ENCODE measurements at regions of chr17 and their contacts with region 1.

Region 1: GRCh38 chr17:47615766-47616424 is 33.8 kb upstream of the KPNB1 start:
- DNase-seq: peak in 2 of 5 donors; percentile 36 to 46
- H3K4me3 ChIP-seq: no peak overlapping the region
- H3K4me3 Mint-ChIP-seq: no peak overlapping the region
- H3K27ac ChIP-seq: no peak overlapping the region
- H3K27ac Mint-ChIP-seq: peak overlapping the region in 4 of 8 donors; percentile 30 to 81 (median 51)
- H3K4me1 ChIP-seq: no peaks in the 10 kb centered on the region
- H3K4me1 Mint-ChIP-seq: peaks cover 3 to 7% (median 5%) of the 10 kb centered on the region in 3 donors
- H3K27me3 ChIP-seq: no peaks in the 10 kb centered on the region
- H3K27me3 Mint-ChIP-seq: no peaks in the 10 kb centered on the region

Region 2: DNA sequence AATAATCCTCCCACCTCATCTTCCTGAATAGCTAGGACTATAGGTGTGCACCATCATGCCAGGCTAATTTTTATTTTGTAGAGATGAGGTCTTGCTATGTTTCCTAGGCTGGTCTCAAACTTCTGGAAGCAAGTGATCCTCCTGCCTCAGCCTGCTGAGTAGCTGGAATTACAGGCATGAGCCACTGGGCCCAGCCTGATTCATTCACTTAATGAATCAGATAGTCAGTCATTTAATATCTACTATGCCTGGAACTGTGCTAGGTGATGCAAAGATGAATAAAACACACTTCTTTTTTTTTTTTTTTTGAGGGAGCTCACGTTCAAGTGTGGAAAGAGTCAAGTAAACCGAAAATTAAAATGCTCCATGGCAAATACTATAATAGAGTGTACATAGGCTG is 252.7 kb before region 1 on chr17:
- CTCF ChIA-PET with region 1: interaction called, 11 read pairs
- POLR2A ChIA-PET with region 1: no interaction called
- DNase-seq: no peak
- H3K4me3 ChIP-seq: no peak overlapping the region
- H3K4me3 Mint-ChIP-seq: no peak overlapping the region
- H3K27ac ChIP-seq: no peak overlapping the region
- H3K27ac Mint-ChIP-seq: no peak overlapping the region
- H3K4me1 ChIP-seq: no peaks in the 10 kb centered on the region
- H3K4me1 Mint-ChIP-seq: no peaks in the 10 kb centered on the region
- H3K27me3 ChIP-seq: no peaks in the 10 kb centered on the region
- H3K27me3 Mint-ChIP-seq: peaks cover 0 to 10% of the 10 kb centered on the region in 2 donors

Region 3: GRCh38 chr17:47628014-47628566 is 12.2 kb after region 1 on chr17:
- CTCF ChIA-PET with region 1: interaction called, 20 read pairs
- POLR2A ChIA-PET with region 1: interaction called, 10 read pairs
- DNase-seq: no peak
- H3K4me3 ChIP-seq: no peak overlapping the region
- H3K4me3 Mint-ChIP-seq: no peak overlapping the region
- H3K27ac ChIP-seq: no peak overlapping the region
- H3K27ac Mint-ChIP-seq: peak overlapping the region in 1 of 8 donors; percentile 26
- H3K4me1 ChIP-seq: no peaks in the 10 kb centered on the region
- H3K4me1 Mint-ChIP-seq: no peaks in the 10 kb centered on the region
- H3K27me3 ChIP-seq: no peaks in the 10 kb centered on the region
- H3K27me3 Mint-ChIP-seq: no peaks in the 10 kb centered on the region

Region 4: DNA sequence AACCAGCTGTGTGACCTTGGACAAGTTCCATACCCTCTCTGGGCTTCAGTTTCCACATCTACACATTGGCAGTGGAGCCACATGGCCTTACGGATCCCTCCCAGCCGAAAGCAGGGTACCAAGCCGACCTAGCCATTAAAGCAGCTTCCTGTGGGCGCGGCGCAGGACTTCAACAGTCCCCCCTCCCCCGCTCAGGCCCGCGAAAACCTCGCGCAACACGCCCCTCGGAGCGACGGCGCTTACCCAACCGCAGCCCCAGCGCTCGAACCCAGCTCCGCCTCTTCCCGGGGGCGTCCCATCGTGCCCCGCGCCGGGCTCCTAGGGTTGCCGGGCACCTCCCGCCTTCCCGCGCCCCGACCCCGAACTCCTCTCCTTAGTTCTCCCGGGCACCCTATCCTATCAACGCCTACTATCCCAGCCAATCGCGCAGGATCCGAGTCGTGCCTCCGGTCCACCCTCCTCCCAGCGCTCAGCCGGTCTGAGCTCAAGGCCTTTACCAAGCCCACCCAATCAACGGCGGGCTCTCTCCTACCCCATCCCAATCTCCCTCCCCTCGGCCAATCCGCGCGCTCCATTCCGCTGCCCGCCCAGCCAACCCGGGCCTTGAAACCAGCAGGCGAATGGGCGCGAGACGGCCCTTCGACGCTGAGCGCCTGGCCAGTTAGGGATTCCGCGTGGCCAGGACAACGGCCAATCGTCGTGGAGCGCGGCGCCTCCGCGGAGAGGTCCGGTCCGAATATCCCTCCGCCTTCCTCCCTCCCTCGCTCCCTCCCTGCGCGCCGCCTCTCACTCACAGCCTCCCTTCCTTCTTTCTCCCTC is 33.5 kb after region 1 on chr17 and contains the start of gene KPNB1:
- CTCF ChIA-PET with region 1: interaction called, 11 read pairs
- POLR2A ChIA-PET with region 1: interaction called, 4 read pairs
- DNase-seq: peak; percentile 98 to 99 (median 98)
- H3K4me3 ChIP-seq: peak within 1 kb of the TSS; percentile 84
- H3K4me3 Mint-ChIP-seq: peak within 1 kb of the TSS; percentile 91 to 100 (median 98)
- H3K27ac ChIP-seq: peak within 1 kb of the TSS; percentile 85
- H3K27ac Mint-ChIP-seq: peak within 1 kb of the TSS; percentile 92 to 100 (median 98)
- H3K4me1 ChIP-seq: peaks cover 49% of the 10 kb centered on the region
- H3K4me1 Mint-ChIP-seq: peaks cover 39 to 65% (median 53%) of the 10 kb centered on the region in 3 donors
- H3K27me3 ChIP-seq: no peaks in the 10 kb centered on the region
- H3K27me3 Mint-ChIP-seq: peaks cover 0 to 5% of the 10 kb centered on the region in 2 donors
- total RNA-seq, gene KPNB1: 907 to 915 TPM

Region 5: GRCh38 chr17:47687748-47688147 is 71.9 kb after region 1 on chr17:
- CTCF ChIA-PET with region 1: no interaction called
- POLR2A ChIA-PET with region 1: no interaction called
- DNase-seq: no peak
- H3K4me3 ChIP-seq: no peak overlapping the region
- H3K4me3 Mint-ChIP-seq: no peak overlapping the region
- H3K27ac ChIP-seq: no peak overlapping the region
- H3K27ac Mint-ChIP-seq: peak overlapping the region in 4 of 8 donors; percentile 44 to 79 (median 70)
- H3K4me1 ChIP-seq: peaks cover 4% of the 10 kb centered on the region
- H3K4me1 Mint-ChIP-seq: peaks cover 11 to 13% (median 11%) of the 10 kb centered on the region in 3 donors
- H3K27me3 ChIP-seq: no peaks in the 10 kb centered on the region
- H3K27me3 Mint-ChIP-seq: no peaks in the 10 kb centered on the region

Region 6: DNA sequence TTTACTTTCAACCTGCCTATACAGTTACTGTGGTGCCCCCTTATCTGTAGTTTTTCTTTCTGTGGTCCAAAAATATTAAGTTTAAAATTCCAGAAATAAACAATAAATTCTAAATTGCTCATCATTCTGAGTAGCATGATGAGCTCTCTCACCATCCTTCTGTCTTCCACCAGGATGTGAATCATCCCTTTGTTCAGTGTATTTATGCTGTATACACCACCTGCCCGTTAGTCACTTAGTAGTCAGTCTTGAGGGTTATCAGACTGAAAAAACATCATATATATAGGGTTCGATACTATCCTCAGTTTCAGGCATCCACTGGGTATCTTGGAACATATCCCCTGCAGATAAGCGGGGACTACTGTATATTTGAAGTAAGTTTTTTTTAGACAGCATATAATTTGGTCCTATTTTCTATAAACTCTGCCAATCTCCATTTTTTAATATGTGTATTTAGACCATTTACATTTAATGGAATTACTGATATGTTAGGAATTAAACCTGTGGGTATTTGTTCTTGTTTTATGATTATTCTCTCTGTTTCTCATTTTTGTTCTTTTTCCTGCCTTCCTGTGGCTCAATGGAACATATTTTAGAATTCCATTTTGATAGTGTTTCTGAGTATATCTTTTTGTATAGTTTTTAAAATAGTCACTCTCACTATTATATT is 148.2 kb after region 1 on chr17:
- CTCF ChIA-PET with region 1: no interaction called
- POLR2A ChIA-PET with region 1: no interaction called
- DNase-seq: no peak
- H3K4me3 ChIP-seq: no peak overlapping the region
- H3K4me3 Mint-ChIP-seq: peak overlapping the region in 1 of 7 donors; percentile 51
- H3K27ac ChIP-seq: no peak overlapping the region
- H3K27ac Mint-ChIP-seq: peak overlapping the region in 4 of 8 donors; percentile 3 to 58 (median 22)
- H3K4me1 ChIP-seq: peaks cover 16% of the 10 kb centered on the region
- H3K4me1 Mint-ChIP-seq: peaks cover 19 to 23% (median 21%) of the 10 kb centered on the region in 3 donors
- H3K27me3 ChIP-seq: no peaks in the 10 kb centered on the region
- H3K27me3 Mint-ChIP-seq: no peaks in the 10 kb centered on the region

Measured in CD8-positive, alpha-beta memory T cell (primary cell).